PC-3 (cell line): ENCODE measurements at regions of chr2 and their contacts with region 1.

Region 1: DNA sequence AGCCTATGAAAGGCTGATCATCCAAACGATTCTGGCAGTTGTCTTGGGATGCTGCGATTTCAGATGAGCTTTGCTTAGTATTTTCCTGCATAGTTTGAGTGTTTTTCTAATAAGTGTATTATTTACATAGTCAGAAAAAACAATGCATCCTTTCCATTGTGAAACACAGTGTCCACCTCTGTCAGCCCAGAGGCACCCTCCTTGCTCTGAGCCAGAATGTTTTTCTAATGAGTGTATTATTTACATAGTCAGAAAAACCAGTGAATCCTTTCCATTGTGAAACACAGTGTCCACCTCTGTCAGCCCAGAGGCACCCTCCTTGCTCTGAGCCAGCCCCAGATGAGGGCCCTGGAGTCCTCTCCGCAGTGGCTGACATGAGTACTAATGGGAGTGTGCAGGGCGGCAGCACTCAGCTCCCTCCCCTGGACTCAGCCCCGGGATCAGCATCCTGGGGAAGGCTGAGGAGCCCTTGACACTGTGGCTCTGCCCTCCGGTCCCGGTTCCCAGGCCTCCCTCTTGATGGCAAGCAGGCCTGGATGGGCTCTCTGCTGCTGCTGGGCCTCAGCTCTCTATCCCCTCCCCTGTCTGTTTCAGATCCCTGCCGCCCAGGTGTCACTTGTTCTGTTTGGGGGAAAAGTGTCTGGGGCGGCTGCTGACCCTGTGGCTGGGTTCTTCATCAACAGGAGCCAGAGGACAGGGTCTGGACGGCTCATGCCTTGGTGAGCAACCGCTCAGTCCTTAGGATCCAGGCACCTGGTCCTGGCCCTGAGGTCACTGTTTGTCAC is 5.9 kb downstream of the MFSD2B start:
- DNase-seq: peak; percentile 98
- ATAC-seq: peak; percentile 94
- H3K4me3 ChIP-seq: no peak overlapping the region
- H3K27ac ChIP-seq: peak overlapping the region; percentile 79
- H3K4me1 ChIP-seq: peaks cover 46% of the 10 kb centered on the region
- H3K27me3 ChIP-seq: no peaks in the 10 kb centered on the region
- CTCF ChIP-seq: no peak

Region 2: DNA sequence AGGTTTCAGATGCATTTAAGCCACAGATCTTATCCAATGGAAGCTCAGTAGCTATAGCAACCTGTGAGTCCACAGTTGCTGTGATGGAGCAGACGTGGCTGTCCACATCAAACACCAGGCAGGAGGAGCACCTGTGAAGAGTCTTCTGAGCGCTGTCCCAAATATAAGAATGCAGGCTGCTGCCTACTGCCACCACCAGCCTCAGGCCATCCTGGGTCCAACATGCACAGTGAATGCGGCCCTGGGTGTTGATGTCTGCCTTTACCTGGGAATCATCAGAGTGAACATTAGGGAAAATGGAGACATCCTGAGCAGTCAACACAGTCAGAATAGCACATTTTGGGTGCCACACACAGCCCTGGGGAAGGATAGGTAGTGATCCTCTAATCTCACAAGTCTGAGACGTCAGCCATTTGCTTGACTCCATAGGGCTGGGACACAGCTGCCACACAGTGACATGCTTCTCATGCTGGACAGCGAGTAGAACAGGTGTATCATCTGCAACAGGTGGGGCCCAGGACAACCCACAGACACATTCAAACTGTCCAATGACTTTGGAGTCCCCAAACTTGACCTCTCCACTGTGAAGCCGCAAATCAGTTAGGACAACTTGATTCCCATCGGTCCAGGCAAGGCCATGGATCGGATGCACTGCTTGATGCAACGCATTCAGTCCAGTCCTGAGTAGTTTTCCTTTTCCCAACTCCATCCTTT is 23.2 kb after region 1 on chr2:
- CTCF ChIA-PET with region 1: no interaction called
- POLR2A ChIA-PET with region 1: interaction called, 14 read pairs
- intact Hi-C with region 1: no loop called
- DNase-seq: no peak
- ATAC-seq: no peak
- H3K4me3 ChIP-seq: no peak overlapping the region
- H3K27ac ChIP-seq: no peak overlapping the region
- H3K4me1 ChIP-seq: no peaks in the 10 kb centered on the region
- H3K27me3 ChIP-seq: no peaks in the 10 kb centered on the region
- CTCF ChIP-seq: no peak